Activated CD8-positive, alpha-beta T cell treated with anti-CD3 and anti-CD28 coated beads for 36 hours (primary cell): ENCODE measurements at regions of chr10 and their contacts with region 1.

Region 1: GRCh38 chr10:73886085-73886529 is 11.8 kb upstream of the CAMK2G start:
- DNase-seq: peak; percentile 72
- ATAC-seq: peak; percentile 96
- H3K4me3 Mint-ChIP-seq: no peak overlapping the region
- H3K27ac Mint-ChIP-seq: no peak overlapping the region
- H3K4me1 Mint-ChIP-seq: peaks cover 2% of the 10 kb centered on the region
- H3K27me3 Mint-ChIP-seq: no peaks in the 10 kb centered on the region
- CTCF ChIP-seq: peak; percentile 92

Region 2: GRCh38 chr10:73339436-73339835 is 546.7 kb before region 1 on chr10:
- CTCF ChIA-PET with region 1: no interaction called
- POLR2A ChIA-PET with region 1: no interaction called
- intact Hi-C with region 1: no loop called
- DNase-seq: no peak
- ATAC-seq: no peak
- H3K4me3 Mint-ChIP-seq: no peak overlapping the region
- H3K27ac Mint-ChIP-seq: no peak overlapping the region
- H3K4me1 Mint-ChIP-seq: no peaks in the 10 kb centered on the region
- H3K27me3 Mint-ChIP-seq: no peaks in the 10 kb centered on the region
- CTCF ChIP-seq: no peak

Region 3: GRCh38 chr10:73848821-73849489 is 37.2 kb before region 1 on chr10:
- CTCF ChIA-PET with region 1: interaction called, 430 read pairs
- POLR2A ChIA-PET with region 1: interaction called, 3 read pairs
- intact Hi-C with region 1: no loop called
- DNase-seq: peak; percentile 97
- ATAC-seq: peak; percentile 100
- H3K4me3 Mint-ChIP-seq: no peak overlapping the region
- H3K27ac Mint-ChIP-seq: peak overlapping the region; percentile 76
- H3K4me1 Mint-ChIP-seq: peaks cover 12% of the 10 kb centered on the region
- H3K27me3 Mint-ChIP-seq: no peaks in the 10 kb centered on the region
- CTCF ChIP-seq: peak; percentile 94

Region 4: GRCh38 chr10:73920089-73920488 is 34.0 kb after region 1 on chr10:
- CTCF ChIA-PET with region 1: interaction called, 14 read pairs
- POLR2A ChIA-PET with region 1: interaction called, 3 read pairs
- intact Hi-C with region 1: no loop called
- DNase-seq: no peak
- ATAC-seq: no peak
- H3K4me3 Mint-ChIP-seq: no peak overlapping the region
- H3K27ac Mint-ChIP-seq: no peak overlapping the region
- H3K4me1 Mint-ChIP-seq: peaks cover 23% of the 10 kb centered on the region
- H3K27me3 Mint-ChIP-seq: peaks cover 39% of the 10 kb centered on the region
- CTCF ChIP-seq: no peak

Region 5: DNA sequence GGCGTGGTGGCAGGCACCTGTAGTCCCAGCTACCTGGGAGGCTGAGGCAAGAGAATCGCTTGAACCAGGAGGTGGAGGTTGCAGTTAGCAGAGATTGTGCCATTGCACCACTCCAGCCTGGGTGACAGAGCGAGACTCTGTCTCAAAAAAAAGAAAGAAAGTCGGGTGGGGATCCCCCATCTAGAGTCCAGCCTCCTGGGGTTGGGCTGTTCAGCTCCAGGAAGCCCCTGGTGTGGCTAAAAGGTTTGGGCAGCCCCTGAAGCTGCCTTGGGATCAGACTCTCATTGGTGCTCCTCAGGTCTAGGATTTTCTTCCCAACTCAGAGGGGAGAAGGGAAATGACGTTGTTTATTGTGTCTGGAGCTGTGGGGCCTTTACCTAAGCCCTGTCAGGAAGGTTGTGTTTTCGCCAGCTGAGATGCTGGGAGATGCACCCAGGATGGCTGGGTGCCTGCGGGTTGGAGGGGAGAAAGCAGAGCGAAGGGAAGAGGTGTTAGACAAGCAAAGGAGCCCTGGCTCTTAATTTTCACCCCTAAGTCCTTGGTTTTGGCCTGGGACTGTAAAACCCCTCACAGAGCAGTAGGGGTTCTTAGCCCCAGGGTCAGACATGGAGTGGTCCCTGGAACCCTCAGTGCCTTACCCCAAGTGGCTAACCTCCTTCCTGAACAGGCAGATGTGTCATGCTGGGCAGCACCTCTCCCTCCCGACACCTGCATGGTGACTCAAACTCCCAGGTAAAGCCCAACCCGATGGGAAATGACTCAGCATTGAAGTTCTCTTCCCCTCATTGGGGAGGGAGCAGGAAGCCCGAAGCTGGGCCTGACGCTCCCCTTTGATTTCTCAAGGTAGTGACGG is 45.9 kb after region 1 on chr10:
- CTCF ChIA-PET with region 1: interaction called, 466 read pairs
- POLR2A ChIA-PET with region 1: no interaction called
- intact Hi-C with region 1: no loop called
- DNase-seq: peak; percentile 77
- ATAC-seq: peak; percentile 91
- H3K4me3 Mint-ChIP-seq: no peak overlapping the region
- H3K27ac Mint-ChIP-seq: peak overlapping the region; percentile 28
- H3K4me1 Mint-ChIP-seq: peaks cover 17% of the 10 kb centered on the region
- H3K27me3 Mint-ChIP-seq: peaks cover 19% of the 10 kb centered on the region
- CTCF ChIP-seq: no peak

Region 6: GRCh38 chr10:73956476-73957359 is 70.6 kb after region 1 on chr10:
- CTCF ChIA-PET with region 1: interaction called, 32 read pairs
- POLR2A ChIA-PET with region 1: interaction called, 4 read pairs
- intact Hi-C with region 1: no loop called
- DNase-seq: peak; percentile 53
- ATAC-seq: peak; percentile 82
- H3K4me3 Mint-ChIP-seq: peak overlapping the region; percentile 38
- H3K27ac Mint-ChIP-seq: peak overlapping the region; percentile 84
- H3K4me1 Mint-ChIP-seq: peaks cover 40% of the 10 kb centered on the region
- H3K27me3 Mint-ChIP-seq: no peaks in the 10 kb centered on the region
- CTCF ChIP-seq: no peak

Region 7: GRCh38 chr10:74103560-74104248 is 217.6 kb after region 1 on chr10:
- CTCF ChIA-PET with region 1: interaction called, 14 read pairs
- POLR2A ChIA-PET with region 1: no interaction called
- intact Hi-C with region 1: loop called (anchors 5 kb)
- DNase-seq: no peak
- ATAC-seq: peak; percentile 47
- H3K4me3 Mint-ChIP-seq: no peak overlapping the region
- H3K27ac Mint-ChIP-seq: no peak overlapping the region
- H3K4me1 Mint-ChIP-seq: no peaks in the 10 kb centered on the region
- H3K27me3 Mint-ChIP-seq: no peaks in the 10 kb centered on the region
- CTCF ChIP-seq: peak; percentile 32